ENCODE measurements at regions of chr4 and their contacts with region 1.

Region 1: GRCh38 chr4:186587416-186588018 is 32.1 kb upstream of the MTNR1A start:
- DNase-seq: peak; percentile 65
- ATAC-seq: peak; percentile 58
- H3K4me3 ChIP-seq: no peak overlapping the region
- H3K27ac ChIP-seq: no peak overlapping the region
- H3K4me1 ChIP-seq: peaks cover 3% of the 10 kb centered on the region; the same call in 1 of the 2 replicates
- H3K27me3 ChIP-seq: no peaks in the 10 kb centered on the region
- CTCF ChIP-seq: peak; percentile 80
- POLR2A ChIP-seq: no peak
- RAD21 ChIP-seq: peak; percentile 68

Region 2: DNA sequence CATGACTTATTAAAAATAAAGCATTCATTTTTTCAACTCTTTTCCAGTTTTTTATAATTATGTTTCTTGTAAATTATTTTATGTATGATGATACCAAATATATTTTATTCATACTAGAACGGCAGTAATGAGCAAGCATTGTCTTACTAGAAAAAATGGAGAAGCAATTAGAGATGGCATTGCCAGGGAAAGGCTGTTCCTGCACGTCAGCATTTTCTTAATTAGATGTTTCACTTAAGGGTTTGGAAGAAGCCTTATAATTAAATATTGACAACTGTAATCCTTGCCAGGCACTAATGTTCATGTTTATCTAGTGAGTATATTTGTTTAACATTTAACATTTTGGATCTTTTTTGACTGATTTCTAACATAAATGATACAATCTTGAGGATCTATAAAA is 466.5 kb before region 1 on chr4:
- CTCF ChIA-PET with region 1: no interaction called
- POLR2A ChIA-PET with region 1: no interaction called
- dilution Hi-C with region 1: no loop called
- in situ Hi-C with region 1: no loop called
- intact Hi-C with region 1: no loop called
- DNase-seq: no peak
- ATAC-seq: no peak
- H3K4me3 ChIP-seq: no peak overlapping the region
- H3K27ac ChIP-seq: no peak overlapping the region
- H3K4me1 ChIP-seq: no peaks in the 10 kb centered on the region
- H3K27me3 ChIP-seq: no peaks in the 10 kb centered on the region
- CTCF ChIP-seq: no peak
- POLR2A ChIP-seq: no peak
- RAD21 ChIP-seq: no peak

Region 3: GRCh38 chr4:186297013-186297645 is 290.4 kb before region 1 on chr4:
- CTCF ChIA-PET with region 1: no interaction called
- POLR2A ChIA-PET with region 1: no interaction called
- dilution Hi-C with region 1: no loop called
- in situ Hi-C with region 1: loop called (anchors 10 kb)
- intact Hi-C with region 1: loop called (anchors 1 kb)
- DNase-seq: peak; percentile 70
- ATAC-seq: peak; percentile 86
- H3K4me3 ChIP-seq: no peak overlapping the region
- H3K27ac ChIP-seq: no peak overlapping the region
- H3K4me1 ChIP-seq: no peaks in the 10 kb centered on the region
- H3K27me3 ChIP-seq: peaks cover 1% of the 10 kb centered on the region; the same call in 1 of the 2 replicates
- CTCF ChIP-seq: peak; percentile 74
- POLR2A ChIP-seq: no peak
- RAD21 ChIP-seq: peak; percentile 75

Region 4: DNA sequence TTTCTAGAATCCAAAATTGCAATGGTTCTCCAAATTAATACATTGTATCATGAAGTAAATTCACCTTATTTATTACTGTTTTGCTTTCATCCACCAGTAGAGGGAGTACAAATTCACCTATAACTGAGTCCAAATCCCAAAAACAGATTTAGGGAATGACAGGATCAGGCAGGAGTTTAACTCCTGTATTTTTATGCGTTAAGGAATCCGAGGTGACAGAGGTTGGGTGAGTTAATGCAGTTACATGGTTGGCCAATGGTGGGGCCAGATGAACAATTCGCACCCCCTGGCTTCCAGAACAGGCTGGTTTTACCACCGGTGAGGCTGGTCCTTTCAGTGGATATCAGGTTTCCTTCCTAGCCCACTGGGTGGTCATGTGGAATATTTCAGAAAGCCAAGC is 114.6 kb before region 1 on chr4:
- CTCF ChIA-PET with region 1: interaction called, 6 read pairs
- POLR2A ChIA-PET with region 1: no interaction called
- dilution Hi-C with region 1: no loop called
- in situ Hi-C with region 1: no loop called
- intact Hi-C with region 1: loop called (anchors 1 kb)
- DNase-seq: peak; percentile 56
- ATAC-seq: peak; percentile 81
- H3K4me3 ChIP-seq: no peak overlapping the region
- H3K27ac ChIP-seq: no peak overlapping the region
- H3K4me1 ChIP-seq: 0 out of 2 replicates have a peak, but pooled peaks cover 1% of the 10 kb centered on the region
- H3K27me3 ChIP-seq: peaks cover 5% of the 10 kb centered on the region; the same call in 1 of the 2 replicates
- CTCF ChIP-seq: peak; percentile 64
- POLR2A ChIP-seq: no peak
- RAD21 ChIP-seq: peak; percentile 49

Region 5: GRCh38 chr4:186485561-186486062 is 101.9 kb before region 1 on chr4:
- CTCF ChIA-PET with region 1: no interaction called
- POLR2A ChIA-PET with region 1: no interaction called
- dilution Hi-C with region 1: no loop called
- in situ Hi-C with region 1: no loop called
- intact Hi-C with region 1: loop called (anchors 5 kb)
- DNase-seq: peak; percentile 19
- ATAC-seq: peak; percentile 66
- H3K4me3 ChIP-seq: peak overlapping the region; percentile 41
- H3K27ac ChIP-seq: no peak overlapping the region
- H3K4me1 ChIP-seq: no peaks in the 10 kb centered on the region
- H3K27me3 ChIP-seq: peaks cover 2% of the 10 kb centered on the region
- CTCF ChIP-seq: 0 out of 2 replicates have a peak, but pooled peaks have one; percentile 21
- POLR2A ChIP-seq: no peak
- RAD21 ChIP-seq: no peak

Measured in IMR-90 (cell line).